ENCODE measurements at regions of chr1 and their contacts with region 1.

Region 1: GRCh38 chr1:177368255-177368654 is 197.5 kb downstream of the BRINP2 start:
- DNase-seq: no peak
- ATAC-seq: no peak

Region 2: GRCh38 chr1:175887981-175888433 is 1480.2 kb before region 1 on chr1:
- intact Hi-C with region 1: no loop called
- DNase-seq: peak; percentile 64
- ATAC-seq: peak; percentile 95

Region 3: GRCh38 chr1:177328251-177328650 is 40.0 kb before region 1 on chr1:
- intact Hi-C with region 1: loop called (anchors 2 kb)
- DNase-seq: no peak
- ATAC-seq: no peak

Measured in Right ventricle myocardium superior (tissue), 1 donor.